Activated CD4-positive, alpha-beta T cell treated with anti-CD3 and anti-CD28 coated beads for 36 hours (primary cell): ENCODE measurements at regions of chr1 and their contacts with region 1.

Region 1: DNA sequence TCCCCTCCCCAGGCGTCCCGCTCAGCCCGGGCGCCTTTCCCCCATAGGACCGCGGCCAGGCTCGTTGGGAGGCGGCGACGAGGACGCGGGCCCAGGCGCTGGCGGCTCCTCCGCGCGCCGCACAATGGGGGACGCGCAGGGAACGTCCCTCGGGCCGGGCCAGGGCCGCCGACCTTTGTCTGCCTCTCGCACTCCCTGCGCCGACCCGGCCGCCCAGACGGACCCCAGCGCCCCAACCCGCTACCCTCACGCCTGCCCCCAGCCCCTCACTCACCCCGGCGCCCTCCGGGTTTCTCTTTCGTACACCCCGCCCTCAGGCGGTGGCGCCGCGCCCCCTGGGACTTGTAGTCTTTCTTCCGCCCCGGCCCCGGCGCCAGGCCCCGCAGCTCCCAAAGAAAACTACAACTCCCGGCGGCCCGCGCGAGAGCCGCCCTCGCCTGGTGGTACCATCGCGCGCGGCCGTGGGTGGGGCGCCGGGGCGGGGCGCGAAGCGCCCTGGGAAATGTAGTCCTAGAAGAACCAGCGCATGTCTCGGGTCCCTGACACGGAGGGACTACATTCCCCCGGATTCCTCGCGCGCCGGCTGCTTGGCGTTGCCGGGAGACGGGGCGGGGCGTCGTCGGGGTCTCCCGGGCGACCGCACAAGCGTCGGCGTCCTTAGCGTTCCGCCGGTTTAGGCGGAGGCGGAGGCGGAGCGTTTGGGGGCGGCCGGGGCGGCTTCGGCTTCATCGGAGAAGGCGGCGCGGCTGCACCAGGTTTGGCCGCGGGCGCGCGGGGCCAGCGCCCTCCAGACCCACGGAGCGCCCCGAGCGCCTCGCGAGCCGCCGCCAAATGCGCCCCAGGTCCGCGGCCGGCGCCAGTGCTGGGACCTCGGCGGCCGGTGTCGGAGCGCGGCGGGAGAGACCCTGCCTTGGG is at the start of gene C1orf159:
- DNase-seq: peak; percentile 99
- ATAC-seq: peak; percentile 96
- H3K4me3 Mint-ChIP-seq: peak within 1 kb of the TSS; percentile 76
- H3K27ac Mint-ChIP-seq: peak within 1 kb of the TSS; percentile 25
- H3K4me1 Mint-ChIP-seq: peaks cover 11% of the 10 kb centered on the region
- H3K27me3 Mint-ChIP-seq: peaks cover 3% of the 10 kb centered on the region
- total RNA-seq, gene C1orf159: 11.3 to 13.5 TPM

Region 2: DNA sequence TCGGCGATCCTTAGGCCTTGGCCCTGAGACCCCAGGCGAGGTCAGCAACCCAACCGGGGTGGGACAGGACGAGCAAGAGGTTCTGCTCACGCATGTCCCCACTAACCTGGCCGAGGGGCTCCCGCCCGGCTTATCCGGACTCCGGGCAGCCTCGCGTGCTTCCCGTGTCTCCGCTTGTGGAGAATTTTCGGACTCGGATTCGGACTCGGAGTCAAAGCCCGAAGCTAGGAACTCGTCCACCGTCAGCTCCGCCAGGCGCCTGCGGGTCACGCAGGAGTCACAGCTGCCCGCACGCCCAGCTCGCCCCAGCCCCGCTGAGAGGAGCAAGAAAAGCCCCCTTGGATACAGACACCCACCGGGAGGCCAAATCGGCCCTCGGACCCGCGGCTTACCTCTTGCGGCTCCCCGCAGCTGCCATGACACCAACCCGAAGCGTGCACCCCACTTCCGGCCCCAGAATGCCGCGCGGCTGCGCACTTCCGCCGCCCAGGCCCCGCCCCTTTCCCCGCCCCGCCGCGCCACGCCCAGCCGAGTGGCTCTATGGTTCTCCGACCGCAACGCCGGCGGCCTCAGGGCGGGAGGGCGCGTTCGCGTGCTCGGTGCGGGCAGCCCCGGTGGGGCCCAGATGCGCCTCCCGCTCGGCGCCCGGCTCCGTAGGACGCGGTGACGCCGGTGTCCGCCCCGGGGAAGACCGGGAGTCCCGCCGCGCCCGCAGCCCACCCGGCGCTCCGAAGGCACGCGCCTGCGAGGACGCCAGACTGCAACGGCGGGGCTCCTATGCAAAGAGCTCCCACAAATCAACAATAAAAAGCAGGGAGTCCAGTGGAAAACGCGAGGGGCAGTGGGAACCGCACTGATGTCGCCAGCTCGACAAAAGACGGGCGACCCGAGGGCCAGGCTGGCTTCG is 157.0 kb before region 1 on chr1 and contains the start of gene NOC2L:
- CTCF ChIA-PET with region 1: no interaction called
- POLR2A ChIA-PET with region 1: no interaction called
- intact Hi-C with region 1: loop called in 1 of 2 experiments (anchors 1 kb)
- DNase-seq: peak; percentile 98
- ATAC-seq: peak; percentile 86
- H3K4me3 Mint-ChIP-seq: peak within 1 kb of the TSS; percentile 82
- H3K27ac Mint-ChIP-seq: peak within 1 kb of the TSS; percentile 63
- H3K4me1 Mint-ChIP-seq: peaks cover 18% of the 10 kb centered on the region
- H3K27me3 Mint-ChIP-seq: no peaks in the 10 kb centered on the region
- total RNA-seq, gene NOC2L: 112 to 134 TPM

Region 3: GRCh38 chr1:1059494-1060280 is 56.4 kb before region 1 on chr1:
- CTCF ChIA-PET with region 1: interaction called, 3 read pairs
- POLR2A ChIA-PET with region 1: no interaction called
- intact Hi-C with region 1: loop called (anchors 1 kb)
- DNase-seq: peak; percentile 95
- ATAC-seq: peak; percentile 51
- H3K4me3 Mint-ChIP-seq: peak overlapping the region; percentile 82
- H3K27ac Mint-ChIP-seq: no peak overlapping the region
- H3K4me1 Mint-ChIP-seq: peaks cover 29% of the 10 kb centered on the region
- H3K27me3 Mint-ChIP-seq: peaks cover 20% of the 10 kb centered on the region

Region 4: GRCh38 chr1:1206376-1207260 is 90.6 kb after region 1 on chr1 and contains the start of gene TNFRSF18:
- CTCF ChIA-PET with region 1: interaction called, 4 read pairs
- POLR2A ChIA-PET with region 1: no interaction called
- intact Hi-C with region 1: loop called in 1 of 2 experiments (anchors 1 kb)
- DNase-seq: peak; percentile 75
- ATAC-seq: peak; percentile 7
- H3K4me3 Mint-ChIP-seq: peak within 1 kb of the TSS; percentile 77
- H3K27ac Mint-ChIP-seq: peak within 1 kb of the TSS; percentile 99
- H3K4me1 Mint-ChIP-seq: peaks cover 31% of the 10 kb centered on the region
- H3K27me3 Mint-ChIP-seq: no peaks in the 10 kb centered on the region
- total RNA-seq, gene TNFRSF18: 95.0 to 164 TPM

Region 5: GRCh38 chr1:1324521-1325287 is 208.7 kb after region 1 on chr1 and contains the starts of genes CPTP and INTS11:
- CTCF ChIA-PET with region 1: no interaction called
- POLR2A ChIA-PET with region 1: no interaction called
- intact Hi-C with region 1: loop called in 1 of 2 experiments (anchors 1 kb)
- DNase-seq: peak; percentile 98
- ATAC-seq: peak; percentile 90
- H3K4me3 Mint-ChIP-seq: peak within 1 kb of the TSS; percentile 80
- H3K27ac Mint-ChIP-seq: peak within 1 kb of the TSS; percentile 83
- H3K4me1 Mint-ChIP-seq: peaks cover 31% of the 10 kb centered on the region
- H3K27me3 Mint-ChIP-seq: no peaks in the 10 kb centered on the region
- total RNA-seq, gene CPTP: 9.9 to 11.4 TPM
- total RNA-seq, gene INTS11: 117 to 151 TPM

Region 6: DNA sequence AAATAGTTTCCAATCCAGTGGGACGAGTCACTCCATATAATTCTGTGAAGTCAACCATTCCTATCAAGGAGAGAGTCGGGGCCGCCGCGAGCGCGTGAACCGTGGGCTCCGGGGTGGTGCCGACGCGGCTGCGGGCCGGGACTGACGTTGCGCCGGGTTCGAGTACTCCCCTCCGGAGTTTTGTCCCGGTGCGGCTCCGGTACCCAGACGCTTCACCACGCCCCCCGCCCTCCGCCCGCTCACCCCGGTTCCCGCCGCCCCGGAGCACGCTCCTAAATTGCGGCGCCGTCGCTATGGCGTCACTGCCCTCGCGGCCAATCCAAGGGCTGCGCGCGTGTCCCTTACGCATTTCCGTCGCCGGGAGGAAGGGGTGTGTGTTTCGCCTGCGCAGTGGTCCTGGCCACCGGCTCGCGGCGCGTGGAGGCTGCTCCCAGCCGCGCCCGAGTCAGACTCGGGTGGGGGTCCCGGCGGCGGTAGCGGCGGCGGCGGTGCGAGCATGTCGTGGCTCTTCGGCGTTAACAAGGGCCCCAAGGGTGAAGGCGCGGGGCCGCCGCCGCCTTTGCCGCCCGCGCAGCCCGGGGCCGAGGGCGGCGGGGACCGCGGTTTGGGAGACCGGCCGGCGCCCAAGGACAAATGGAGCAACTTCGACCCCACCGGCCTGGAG is 355.5 kb after region 1 on chr1 and contains the start of gene ATAD3B:
- CTCF ChIA-PET with region 1: no interaction called
- POLR2A ChIA-PET with region 1: no interaction called
- intact Hi-C with region 1: loop called in 1 of 2 experiments (anchors 1 kb)
- DNase-seq: peak; percentile 98
- ATAC-seq: peak; percentile 97
- H3K4me3 Mint-ChIP-seq: peak within 1 kb of the TSS; percentile 89
- H3K27ac Mint-ChIP-seq: peak within 1 kb of the TSS; percentile 67
- H3K4me1 Mint-ChIP-seq: peaks cover 21% of the 10 kb centered on the region
- H3K27me3 Mint-ChIP-seq: no peaks in the 10 kb centered on the region
- total RNA-seq, gene ATAD3B: 26.2 to 39.2 TPM